Activated naive CD4-positive, alpha-beta T cell treated with anti-CD3 and anti-CD28 coated beads for 36 hours (primary cell): ENCODE measurements at regions of chr6 and their contacts with region 1.

Region 1: GRCh38 chr6:141483598-141484061 is 649.1 kb upstream of the GJE1 start:
- DNase-seq: peak; percentile 70
- H3K4me3 Mint-ChIP-seq: peak overlapping the region; percentile 65
- H3K27ac Mint-ChIP-seq: peak overlapping the region; percentile 91
- H3K4me1 Mint-ChIP-seq: peaks cover 33% of the 10 kb centered on the region
- H3K27me3 Mint-ChIP-seq: no peaks in the 10 kb centered on the region

Region 2: DNA sequence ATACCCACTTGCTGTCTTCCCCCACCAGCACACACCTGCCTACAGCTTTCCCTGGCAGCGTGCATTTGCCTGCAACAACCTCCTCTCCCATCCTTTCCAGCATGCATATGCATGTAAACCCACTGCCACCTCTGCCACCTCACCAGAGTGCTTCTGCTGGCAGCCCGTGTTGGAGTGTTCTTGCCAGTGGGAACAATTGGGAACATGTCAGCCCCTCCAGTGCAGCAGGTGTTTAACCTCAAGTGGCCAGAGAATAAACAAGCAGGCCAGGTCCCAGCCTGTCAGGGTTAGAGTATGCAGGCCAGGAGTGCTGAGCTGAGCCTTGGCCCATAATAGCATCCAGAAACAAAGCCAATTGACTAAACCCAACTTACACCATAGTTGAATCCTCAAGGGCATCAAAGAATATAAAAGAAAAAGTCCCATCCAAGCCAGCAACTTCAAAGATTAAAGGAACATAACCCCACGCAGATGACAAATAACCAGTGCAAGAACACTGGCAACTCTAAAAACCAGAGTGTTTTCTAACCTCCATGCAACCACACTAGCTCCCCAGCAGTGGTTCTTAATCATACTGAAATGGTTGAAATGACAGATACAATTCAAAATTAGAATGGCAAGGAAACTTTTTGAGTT is 897.1 kb before region 1 on chr6:
- CTCF ChIA-PET with region 1: no interaction called
- intact Hi-C with region 1: loop called (anchors 1 kb)
- DNase-seq: peak; percentile 24
- H3K4me3 Mint-ChIP-seq: no peak overlapping the region
- H3K27ac Mint-ChIP-seq: no peak overlapping the region
- H3K4me1 Mint-ChIP-seq: peaks cover 7% of the 10 kb centered on the region
- H3K27me3 Mint-ChIP-seq: peaks cover 5% of the 10 kb centered on the region

Region 3: GRCh38 chr6:141153563-141153962 is 330.1 kb before region 1 on chr6:
- CTCF ChIA-PET with region 1: no interaction called
- intact Hi-C with region 1: loop called (anchors 1 kb)
- DNase-seq: peak; percentile 66
- H3K4me3 Mint-ChIP-seq: no peak overlapping the region
- H3K27ac Mint-ChIP-seq: peak overlapping the region; percentile 56
- H3K4me1 Mint-ChIP-seq: peaks cover 24% of the 10 kb centered on the region
- H3K27me3 Mint-ChIP-seq: no peaks in the 10 kb centered on the region

Region 4: GRCh38 chr6:141326426-141326825 is 157.2 kb before region 1 on chr6:
- CTCF ChIA-PET with region 1: no interaction called
- intact Hi-C with region 1: loop called (anchors 1 kb)
- DNase-seq: peak; percentile 80
- H3K4me3 Mint-ChIP-seq: no peak overlapping the region
- H3K27ac Mint-ChIP-seq: no peak overlapping the region
- H3K4me1 Mint-ChIP-seq: peaks cover 15% of the 10 kb centered on the region
- H3K27me3 Mint-ChIP-seq: no peaks in the 10 kb centered on the region

Region 5: GRCh38 chr6:141562851-141563763 is 79.5 kb after region 1 on chr6:
- CTCF ChIA-PET with region 1: interaction called, 4 read pairs
- intact Hi-C with region 1: loop called (anchors 1 kb)
- DNase-seq: peak; percentile 69
- H3K4me3 Mint-ChIP-seq: peak overlapping the region; percentile 64
- H3K27ac Mint-ChIP-seq: peak overlapping the region; percentile 78
- H3K4me1 Mint-ChIP-seq: peaks cover 14% of the 10 kb centered on the region
- H3K27me3 Mint-ChIP-seq: peaks cover 3% of the 10 kb centered on the region

Region 6: DNA sequence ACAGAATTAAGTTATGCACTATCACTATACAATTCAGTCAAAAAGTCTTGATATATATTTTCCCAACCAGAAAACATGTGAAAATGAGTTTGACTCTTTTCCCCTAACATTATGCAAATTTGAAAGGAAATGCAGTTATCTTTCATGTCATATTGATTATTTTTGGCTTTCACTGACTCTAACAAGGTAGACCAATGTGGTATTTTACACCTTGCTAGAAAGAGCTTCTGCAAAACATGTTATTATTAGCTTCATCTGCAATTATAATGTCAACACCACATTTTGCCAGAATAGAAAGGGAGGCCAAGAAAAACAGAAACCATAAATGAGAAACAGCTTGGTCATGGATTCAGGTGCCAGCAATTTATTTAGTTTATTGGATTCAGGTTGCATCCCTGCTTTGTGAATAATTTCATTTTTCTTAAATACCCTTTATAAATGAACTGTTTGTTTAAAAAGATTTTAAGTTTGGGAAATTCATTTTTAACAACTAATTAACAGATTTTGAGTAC is 423.0 kb after region 1 on chr6:
- CTCF ChIA-PET with region 1: no interaction called
- intact Hi-C with region 1: no loop called
- DNase-seq: no peak
- H3K4me3 Mint-ChIP-seq: no peak overlapping the region
- H3K27ac Mint-ChIP-seq: no peak overlapping the region
- H3K4me1 Mint-ChIP-seq: no peaks in the 10 kb centered on the region
- H3K27me3 Mint-ChIP-seq: no peaks in the 10 kb centered on the region

Region 7: DNA sequence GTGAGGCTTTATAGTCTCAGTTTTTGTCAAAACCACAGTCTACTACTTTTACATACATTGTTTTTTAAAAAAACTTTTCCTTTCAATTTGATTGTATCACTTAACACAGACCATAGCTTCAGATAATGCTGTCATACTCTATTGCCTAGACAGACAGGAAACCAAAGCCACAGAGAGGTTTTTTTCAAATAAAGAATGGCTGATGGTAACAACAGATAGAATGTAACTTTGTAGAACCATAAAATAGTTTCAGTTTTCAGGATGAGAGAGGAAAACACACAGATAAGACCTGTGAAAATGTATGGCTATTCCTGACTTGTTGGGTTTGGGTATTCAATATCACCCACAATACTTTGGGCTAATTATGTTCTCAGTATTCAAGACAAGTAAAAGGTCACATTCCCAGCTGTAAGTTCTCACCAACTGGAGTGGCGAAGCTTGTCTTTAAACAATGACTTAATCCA is 912.2 kb after region 1 on chr6:
- CTCF ChIA-PET with region 1: no interaction called
- intact Hi-C with region 1: loop called (anchors 5 kb)
- DNase-seq: no peak
- H3K4me3 Mint-ChIP-seq: no peak overlapping the region
- H3K27ac Mint-ChIP-seq: no peak overlapping the region
- H3K4me1 Mint-ChIP-seq: peaks cover 33% of the 10 kb centered on the region
- H3K27me3 Mint-ChIP-seq: no peaks in the 10 kb centered on the region